H1 (cell line): ENCODE measurements at regions of chr11 and their contacts with region 1.

Region 1: DNA sequence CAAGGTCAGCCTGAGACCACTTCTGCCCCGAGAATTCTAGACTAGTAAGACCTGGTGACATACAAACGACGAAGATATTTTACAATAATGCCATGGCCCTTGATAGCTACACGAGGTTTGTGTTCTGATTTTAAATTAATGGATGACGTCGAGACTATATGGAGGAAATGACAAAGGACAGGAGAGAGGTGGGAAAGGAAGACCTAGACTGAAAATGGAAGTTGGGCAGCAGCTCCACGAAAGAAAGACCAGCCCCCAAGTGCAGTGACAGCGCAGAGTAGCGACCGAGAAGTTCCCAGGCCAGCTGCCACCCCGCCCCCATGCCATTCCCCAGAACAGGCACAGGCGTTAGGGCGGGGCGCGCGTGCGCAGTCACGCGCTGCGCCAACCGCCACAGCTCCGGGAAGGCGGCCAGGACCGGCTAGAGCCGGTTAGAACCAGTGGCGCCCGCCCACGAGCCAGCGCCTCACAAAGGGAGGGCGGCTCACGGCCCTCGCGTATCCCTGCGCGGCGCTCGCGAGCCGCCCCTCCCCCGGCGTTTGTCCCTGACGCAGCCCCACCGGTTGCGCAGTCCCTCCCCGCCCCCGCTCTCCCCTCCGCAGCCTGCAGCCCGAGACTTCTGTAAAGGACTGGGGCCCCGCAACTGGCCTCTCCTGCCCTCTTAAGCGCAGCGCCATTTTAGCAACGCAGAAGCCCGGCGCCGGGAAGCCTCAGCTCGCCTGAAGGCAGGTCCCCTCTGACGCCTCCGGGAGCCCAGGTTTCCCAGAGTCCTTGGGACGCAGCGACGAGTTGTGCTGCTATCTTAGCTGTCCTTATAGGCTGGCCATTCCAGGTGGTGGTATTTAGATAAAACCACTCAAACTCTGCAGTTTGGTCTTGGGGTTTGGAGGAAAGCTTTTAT is 1.5 kb upstream of the MALAT1 start:
- DNase-seq: peak; percentile 97
- H3K4me3 ChIP-seq: peak overlapping the region; percentile 82 to 100 (median 95)
- H3K27ac ChIP-seq: peak overlapping the region; percentile 99
- H3K4me1 ChIP-seq: peaks cover 7 to 21% (median 12%) of the 10 kb centered on the region in 4 experiments; a peak in 6 of 7 replicates
- H3K27me3 ChIP-seq: no peaks in the 10 kb centered on the region
- CTCF ChIP-seq: no peak
- EP300 ChIP-seq: peak; percentile 47 to 98; a peak in 2 of 3 replicates
- POLR2A ChIP-seq: peak; percentile 75 to 91
- RAD21 ChIP-seq: peak; percentile 5 to 31; a peak in 3 of 4 replicates

Region 2: GRCh38 chr11:65366340-65366773 is 131.0 kb before region 1 on chr11:
- CTCF ChIA-PET with region 1: interaction called, 3 read pairs
- POLR2A ChIA-PET with region 1: interaction called, 13 read pairs
- DNase-seq: no peak
- H3K4me3 ChIP-seq: no peak overlapping the region
- H3K27ac ChIP-seq: no peak overlapping the region
- H3K4me1 ChIP-seq: peaks cover 0 to 4% (median 0%) of the 10 kb centered on the region in 4 experiments; a peak in 2 of 7 replicates
- H3K27me3 ChIP-seq: no peaks in the 10 kb centered on the region
- CTCF ChIP-seq: peak in 2 of 3 experiments; percentile 71 to 77; a peak in 3 of 4 replicates
- EP300 ChIP-seq: no peak
- POLR2A ChIP-seq: no peak
- RAD21 ChIP-seq: peak; percentile 87 to 92

Region 3: GRCh38 chr11:65403607-65404121 is 93.7 kb before region 1 on chr11:
- CTCF ChIA-PET with region 1: no interaction called
- POLR2A ChIA-PET with region 1: interaction called, 202 read pairs
- DNase-seq: no peak
- H3K4me3 ChIP-seq: no peak overlapping the region
- H3K27ac ChIP-seq: no peak overlapping the region
- H3K4me1 ChIP-seq: no peaks in the 10 kb centered on the region; a peak in 1 of 7 replicates
- H3K27me3 ChIP-seq: no peaks in the 10 kb centered on the region
- CTCF ChIP-seq: no peak
- EP300 ChIP-seq: no peak
- POLR2A ChIP-seq: no peak
- RAD21 ChIP-seq: no peak

Region 4: GRCh38 chr11:65448418-65449105 is 48.8 kb before region 1 on chr11:
- CTCF ChIA-PET with region 1: no interaction called
- POLR2A ChIA-PET with region 1: interaction called, 30 read pairs
- DNase-seq: no peak
- H3K4me3 ChIP-seq: no peak overlapping the region
- H3K27ac ChIP-seq: no peak overlapping the region
- H3K4me1 ChIP-seq: no peaks in the 10 kb centered on the region; a peak in 4 of 7 replicates
- H3K27me3 ChIP-seq: no peaks in the 10 kb centered on the region; a peak in 2 of 7 replicates
- CTCF ChIP-seq: no peak
- EP300 ChIP-seq: no peak
- POLR2A ChIP-seq: no peak
- RAD21 ChIP-seq: no peak

Region 5: DNA sequence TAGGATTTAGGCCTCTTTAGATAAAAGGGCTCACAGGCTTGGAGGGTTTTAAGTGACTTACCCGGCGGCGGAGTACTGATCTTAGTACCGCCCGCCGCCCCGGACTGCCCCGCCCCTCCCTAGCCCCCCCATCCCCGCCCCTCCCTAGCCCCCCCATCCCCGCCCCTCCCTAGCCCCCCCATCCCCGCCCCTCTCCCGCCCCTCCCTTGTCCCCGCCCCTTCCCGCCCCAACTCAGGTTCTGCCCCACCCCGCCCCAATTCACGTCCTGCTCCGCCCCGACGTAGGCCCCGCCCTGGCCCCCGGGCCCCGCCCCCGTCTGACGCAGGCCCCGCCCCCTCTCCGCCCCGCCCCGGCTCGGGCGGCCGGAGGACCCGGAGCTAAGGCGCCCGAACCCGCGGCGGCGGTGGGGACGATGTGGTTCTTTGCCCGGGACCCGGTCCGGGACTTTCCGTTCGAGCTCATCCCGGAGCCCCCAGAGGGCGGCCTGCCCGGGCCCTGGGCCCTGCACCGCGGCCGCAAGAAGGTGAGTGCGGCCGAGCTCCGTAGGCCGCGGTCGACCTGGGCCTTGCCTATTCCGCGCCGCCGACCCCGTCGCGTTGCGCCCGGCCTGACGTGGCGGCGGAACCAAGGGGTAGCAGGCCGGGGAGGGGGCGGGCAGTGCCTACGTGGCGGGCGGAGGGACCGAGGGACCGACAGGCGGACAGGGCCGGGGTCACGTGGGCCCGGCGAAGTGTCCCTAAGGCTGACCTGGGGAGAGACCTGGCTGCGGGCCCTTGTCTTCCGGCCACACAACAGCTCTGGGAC is 27.6 kb after region 1 on chr11 and contains the start of gene SCYL1:
- CTCF ChIA-PET with region 1: no interaction called
- POLR2A ChIA-PET with region 1: interaction called, 1,569 read pairs
- DNase-seq: peak in 1 of 2 experiments; percentile 88
- H3K4me3 ChIP-seq: peak within 1 kb of the TSS; percentile 60 to 98 (median 82)
- H3K27ac ChIP-seq: no peak within 1 kb of the TSS
- H3K4me1 ChIP-seq: peaks cover 0 to 14% (median 8%) of the 10 kb centered on the region in 4 experiments; a peak in 5 of 7 replicates
- H3K27me3 ChIP-seq: peaks cover 0 to 4% (median 0%) of the 10 kb centered on the region in 4 experiments; a peak in 2 of 7 replicates
- CTCF ChIP-seq: no peak
- EP300 ChIP-seq: no peak
- POLR2A ChIP-seq: peak in 1 of 2 experiments; percentile 53; a peak in 2 of 3 replicates
- RAD21 ChIP-seq: no peak
- total RNA-seq, gene SCYL1: 59.4 and 59.8 TPM in 2 replicates

Region 6: GRCh38 chr11:65569973-65570918 is 72.9 kb after region 1 on chr11 and contains the start of gene ZNRD2:
- CTCF ChIA-PET with region 1: interaction called, 3 read pairs
- POLR2A ChIA-PET with region 1: interaction called, 18 read pairs
- DNase-seq: peak; percentile 95 to 96
- H3K4me3 ChIP-seq: peak within 1 kb of the TSS; percentile 67 to 97 (median 92)
- H3K27ac ChIP-seq: peak within 1 kb of the TSS; percentile 33; the same call in 1 of the 2 replicates
- H3K4me1 ChIP-seq: peaks cover 10 to 29% (median 18%) of the 10 kb centered on the region in 4 experiments
- H3K27me3 ChIP-seq: peaks cover 0 to 11% (median 6%) of the 10 kb centered on the region in 4 experiments; a peak in 6 of 7 replicates
- CTCF ChIP-seq: peak in 2 of 3 experiments; percentile 66 to 84; a peak in 3 of 4 replicates
- EP300 ChIP-seq: no peak
- POLR2A ChIP-seq: peak in 1 of 2 experiments; percentile 80; a peak in 2 of 3 replicates
- RAD21 ChIP-seq: peak; percentile 44 to 50; a peak in 3 of 4 replicates
- total RNA-seq, gene ZNRD2: 53.4 and 56.1 TPM in 2 replicates

Region 7: GRCh38 chr11:65802841-65803240 is 305.4 kb after region 1 on chr11:
- CTCF ChIA-PET with region 1: no interaction called
- POLR2A ChIA-PET with region 1: no interaction called
- DNase-seq: no peak
- H3K4me3 ChIP-seq: no peak overlapping the region
- H3K27ac ChIP-seq: no peak overlapping the region
- H3K4me1 ChIP-seq: peaks cover 0 to 14% (median under 1%) of the 10 kb centered on the region in 4 experiments; a peak in 2 of 7 replicates
- H3K27me3 ChIP-seq: no peaks in the 10 kb centered on the region; a peak in 1 of 7 replicates
- CTCF ChIP-seq: no peak
- EP300 ChIP-seq: no peak
- POLR2A ChIP-seq: no peak
- RAD21 ChIP-seq: no peak